ENCODE measurements at regions of chr7 and their contacts with region 1.

Region 1: GRCh38 chr7:71824006-71824760 is 588.0 kb downstream of the CALN1 start:
- DNase-seq: no peak
- ATAC-seq: no peak
- H3K4me3 ChIP-seq: no peak overlapping the region
- H3K4me3 Mint-ChIP-seq: no peak overlapping the region
- H3K27ac ChIP-seq: no peak overlapping the region
- H3K27ac Mint-ChIP-seq: no peak overlapping the region
- H3K4me1 ChIP-seq: no peaks in the 10 kb centered on the region
- H3K4me1 Mint-ChIP-seq: no peaks in the 10 kb centered on the region
- H3K27me3 ChIP-seq: no peaks in the 10 kb centered on the region
- H3K27me3 Mint-ChIP-seq: no peaks in the 10 kb centered on the region

Region 2: DNA sequence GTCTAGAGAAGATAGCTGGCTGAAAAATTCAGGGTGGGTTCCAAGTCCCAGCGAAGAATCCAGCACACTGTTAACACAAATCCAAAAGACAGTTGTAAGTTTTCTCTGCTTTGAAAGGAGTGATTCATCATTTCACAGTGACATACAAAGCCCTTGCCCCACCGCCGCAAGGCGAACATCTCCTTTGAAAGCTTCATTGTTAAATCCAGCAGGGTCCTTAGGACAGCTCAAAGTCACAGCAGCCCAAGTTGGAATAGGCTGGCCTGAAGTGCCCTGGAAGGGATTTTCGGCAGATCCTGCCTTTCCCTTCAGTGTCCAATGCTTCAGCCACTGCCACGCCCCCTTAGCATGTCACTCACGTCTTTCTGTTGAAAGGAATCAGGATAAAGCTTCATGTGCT is 61.9 kb after region 1 on chr7:
- CTCF ChIA-PET with region 1: no interaction called
- POLR2A ChIA-PET with region 1: no interaction called
- intact Hi-C with region 1: loop called in 1 of 2 experiments (anchors 10 kb)
- DNase-seq: no peak
- ATAC-seq: no peak
- H3K4me3 ChIP-seq: no peak overlapping the region
- H3K4me3 Mint-ChIP-seq: no peak overlapping the region
- H3K27ac ChIP-seq: no peak overlapping the region
- H3K27ac Mint-ChIP-seq: no peak overlapping the region
- H3K4me1 ChIP-seq: no peaks in the 10 kb centered on the region
- H3K4me1 Mint-ChIP-seq: no peaks in the 10 kb centered on the region
- H3K27me3 ChIP-seq: no peaks in the 10 kb centered on the region
- H3K27me3 Mint-ChIP-seq: no peaks in the 10 kb centered on the region